Endothelial cell of umbilical vein (primary cell): ENCODE measurements at regions of chr19 and their contacts with region 1.

Region 1: GRCh38 chr19:1540365-1540925 is 16.6 kb downstream of the PLK5 start:
- DNase-seq: no peak
- H3K4me3 ChIP-seq: no peak overlapping the region
- H3K27ac ChIP-seq: no peak overlapping the region
- H3K4me1 ChIP-seq: no peaks in the 10 kb centered on the region
- H3K27me3 ChIP-seq: no peaks in the 10 kb centered on the region
- CTCF ChIP-seq: no peak
- POLR2A ChIP-seq: no peak

Region 2: GRCh38 chr19:1360818-1361461 is 179.5 kb before region 1 on chr19:
- CTCF ChIA-PET with region 1: no interaction called
- POLR2A ChIA-PET with region 1: no interaction called
- dilution Hi-C with region 1: no loop called
- intact Hi-C with region 1: no loop called
- DNase-seq: peak; percentile 24
- H3K4me3 ChIP-seq: no peak overlapping the region
- H3K27ac ChIP-seq: peak overlapping the region; percentile 21
- H3K4me1 ChIP-seq: peaks cover 16% of the 10 kb centered on the region
- H3K27me3 ChIP-seq: no peaks in the 10 kb centered on the region
- CTCF ChIP-seq: no peak
- POLR2A ChIP-seq: no peak

Region 3: GRCh38 chr19:1489463-1490310 is 50.8 kb before region 1 on chr19:
- CTCF ChIA-PET with region 1: no interaction called
- POLR2A ChIA-PET with region 1: no interaction called
- dilution Hi-C with region 1: no loop called
- intact Hi-C with region 1: no loop called
- DNase-seq: no peak
- H3K4me3 ChIP-seq: peak overlapping the region; percentile 9 to 51 (median 11)
- H3K27ac ChIP-seq: no peak overlapping the region
- H3K4me1 ChIP-seq: peaks cover 10% of the 10 kb centered on the region
- H3K27me3 ChIP-seq: peaks cover 0 to 6% of the 10 kb centered on the region in 2 experiments
- CTCF ChIP-seq: no peak
- POLR2A ChIP-seq: peak; percentile 20

Region 4: GRCh38 chr19:1513499-1514294 is 26.7 kb before region 1 on chr19:
- CTCF ChIA-PET with region 1: interaction called, 10 read pairs
- POLR2A ChIA-PET with region 1: no interaction called
- dilution Hi-C with region 1: no loop called
- intact Hi-C with region 1: no loop called
- DNase-seq: no peak
- H3K4me3 ChIP-seq: no peak overlapping the region
- H3K27ac ChIP-seq: no peak overlapping the region
- H3K4me1 ChIP-seq: no peaks in the 10 kb centered on the region
- H3K27me3 ChIP-seq: peaks cover 5 to 8% of the 10 kb centered on the region in 2 experiments
- CTCF ChIP-seq: peak; percentile 40 to 70
- POLR2A ChIP-seq: no peak

Region 5: GRCh38 chr19:1855040-1855827 is 314.8 kb after region 1 on chr19:
- CTCF ChIA-PET with region 1: no interaction called
- POLR2A ChIA-PET with region 1: no interaction called
- dilution Hi-C with region 1: no loop called
- intact Hi-C with region 1: no loop called
- DNase-seq: peak; percentile 84
- H3K4me3 ChIP-seq: peak overlapping the region in 1 of 3 experiments; percentile 4
- H3K27ac ChIP-seq: peak overlapping the region; percentile 30
- H3K4me1 ChIP-seq: peaks cover 35% of the 10 kb centered on the region
- H3K27me3 ChIP-seq: no peaks in the 10 kb centered on the region
- CTCF ChIP-seq: no peak
- POLR2A ChIP-seq: peak; percentile 81